Heart left ventricle (tissue), 16 donors: ENCODE measurements at regions of chr1 and their contacts with region 1.

Region 1: DNA sequence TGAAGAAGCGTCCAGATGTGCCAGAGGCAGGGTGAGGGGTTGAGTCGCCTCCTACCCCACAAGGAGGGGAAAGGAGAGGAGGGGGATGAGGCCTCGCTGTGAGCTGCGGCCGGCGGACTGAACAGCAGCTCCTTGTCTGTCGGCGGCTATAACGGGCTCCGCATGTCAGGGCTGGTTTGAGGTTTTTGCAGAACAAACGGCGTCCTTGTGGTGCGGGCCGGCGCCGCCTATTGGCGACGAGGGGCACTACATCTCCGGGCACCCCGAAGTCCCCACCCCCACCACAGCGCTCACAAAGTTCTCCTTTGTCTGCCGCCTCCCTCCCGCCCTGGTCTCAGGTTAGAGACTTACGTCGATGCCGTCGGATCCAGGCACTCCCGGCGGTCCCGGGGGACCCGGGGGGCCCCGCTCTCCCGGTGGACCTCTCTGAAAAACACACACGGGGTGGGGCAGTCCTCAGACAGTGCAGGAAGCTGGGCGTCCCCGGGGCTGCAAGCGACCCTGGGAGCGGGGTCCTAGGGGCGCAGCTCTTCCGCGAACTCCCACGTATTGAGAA is 1.8 kb downstream of the COL9A2 start:
- DNase-seq: peak; percentile 78 to 89 (median 80)
- ATAC-seq: peak; percentile 78 to 93 (median 89)
- H3K4me3 ChIP-seq: peak overlapping the region; percentile 6 to 60 (median 47)
- H3K27ac ChIP-seq: peak overlapping the region in 1 of 12 donors; percentile 41
- H3K4me1 ChIP-seq: peaks cover 0 to 44% (median 17%) of the 10 kb centered on the region in 12 donors
- H3K27me3 ChIP-seq: peaks cover 15 to 51% (median 25%) of the 10 kb centered on the region in 9 donors
- CTCF ChIP-seq: peak; percentile 84 to 96 (median 92)
- POLR2A ChIP-seq: no peak

Region 2: DNA sequence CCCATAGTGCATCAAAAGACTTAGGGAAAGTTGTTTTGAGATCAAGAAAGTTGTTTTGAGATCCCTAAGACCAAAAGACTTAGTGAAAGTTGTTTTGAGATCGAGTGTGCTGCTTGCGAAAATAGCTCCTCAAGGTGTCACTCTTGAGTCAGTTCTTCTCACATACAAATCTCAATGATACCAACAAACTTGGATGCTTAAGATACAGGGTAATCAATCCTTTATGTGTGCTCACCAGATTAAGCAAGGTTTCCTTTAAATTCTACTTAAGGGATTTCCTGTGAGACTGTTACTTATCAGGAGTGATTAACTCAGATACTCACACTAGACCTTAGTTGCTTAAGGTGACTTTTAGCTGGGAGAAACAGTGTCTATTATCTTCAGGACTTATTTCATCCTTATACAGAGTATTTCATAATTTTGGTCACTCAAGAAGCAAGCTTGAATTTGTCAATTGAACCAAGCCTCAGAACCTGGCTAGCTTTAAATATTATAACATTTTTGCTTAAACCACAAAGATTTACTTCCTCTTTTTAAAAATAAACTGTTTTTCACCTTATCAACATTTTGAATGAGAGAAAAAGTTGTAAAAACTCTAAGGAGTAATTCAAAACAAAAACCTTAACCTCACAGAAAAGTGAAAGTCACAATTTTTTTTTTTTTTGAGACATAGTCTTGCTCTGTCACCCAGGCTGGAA is 162.1 kb before region 1 on chr1:
- intact Hi-C with region 1: loop called in 3 of 10 experiments (anchors 5 kb)
- DNase-seq: no peak
- ATAC-seq: no peak
- H3K4me3 ChIP-seq: no peak overlapping the region
- H3K27ac ChIP-seq: no peak overlapping the region
- H3K4me1 ChIP-seq: peaks cover 0 to 25% (median 0%) of the 10 kb centered on the region in 12 donors
- H3K27me3 ChIP-seq: peaks cover 0 to 10% (median 0%) of the 10 kb centered on the region in 9 donors
- CTCF ChIP-seq: peak; percentile 45 to 82 (median 68)
- POLR2A ChIP-seq: no peak

Region 3: GRCh38 chr1:40161125-40161887 is 154.0 kb before region 1 on chr1 and contains the start of gene RLF:
- intact Hi-C with region 1: loop called in 2 of 10 experiments (anchors 5 kb)
- DNase-seq: peak; percentile 95 to 97 (median 96)
- ATAC-seq: peak; percentile 99 to 100 (median 100)
- H3K4me3 ChIP-seq: peak within 1 kb of the TSS; percentile 56 to 97 (median 86)
- H3K27ac ChIP-seq: peak within 1 kb of the TSS; percentile 84 to 97 (median 92)
- H3K4me1 ChIP-seq: peaks cover 13 to 44% (median 33%) of the 10 kb centered on the region in 12 donors
- H3K27me3 ChIP-seq: no peaks in the 10 kb centered on the region
- CTCF ChIP-seq: no peak
- POLR2A ChIP-seq: peak; percentile 60 to 87
- total RNA-seq, gene RLF: 9.1 to 14.5 (median 12.3) TPM